Activated CD8-positive, alpha-beta T cell treated with anti-CD3 and anti-CD28 coated beads for 36 hours (primary cell): ENCODE measurements at regions of chr5 and their contacts with region 1.

Region 1: DNA sequence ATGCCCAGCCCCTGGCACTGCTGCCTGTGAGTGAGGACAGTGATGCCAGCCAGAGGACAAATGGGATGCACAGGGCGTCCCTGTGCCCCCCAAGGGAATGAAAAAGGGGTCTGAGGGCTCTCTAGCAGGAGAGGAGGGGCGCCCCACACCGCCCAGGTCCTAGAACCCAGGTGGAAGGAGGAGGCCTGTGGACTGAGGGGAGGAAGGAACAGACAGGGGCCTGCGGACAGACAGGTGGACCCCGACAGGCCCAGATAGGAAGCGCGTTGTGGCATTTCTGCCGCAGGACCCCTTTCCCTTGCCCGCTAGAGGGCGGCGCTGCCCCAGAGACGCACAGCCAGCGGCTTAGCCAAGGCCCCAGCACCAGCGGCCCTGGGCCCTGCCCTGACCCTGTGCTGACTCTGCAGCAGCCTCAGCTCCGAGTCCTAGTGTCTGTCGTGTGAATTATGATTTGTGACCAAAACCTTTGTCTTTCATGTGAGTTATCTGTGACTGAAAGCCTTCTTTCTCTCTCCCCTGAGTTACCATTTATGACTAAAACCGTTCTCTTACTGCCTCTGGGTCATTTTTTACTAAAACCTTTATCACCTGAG is 30.7 kb downstream of the TRIP13 start:
- DNase-seq: peak; percentile 85
- ATAC-seq: peak; percentile 91
- H3K4me3 Mint-ChIP-seq: no peak overlapping the region
- H3K27ac Mint-ChIP-seq: no peak overlapping the region
- H3K4me1 Mint-ChIP-seq: peaks cover 8% of the 10 kb centered on the region
- H3K27me3 Mint-ChIP-seq: peaks cover 28% of the 10 kb centered on the region
- CTCF ChIP-seq: peak; percentile 92

Region 2: GRCh38 chr5:821504-821903 is 101.9 kb before region 1 on chr5:
- CTCF ChIA-PET with region 1: no interaction called
- POLR2A ChIA-PET with region 1: no interaction called
- intact Hi-C with region 1: no loop called
- DNase-seq: no peak
- ATAC-seq: no peak
- H3K4me3 Mint-ChIP-seq: no peak overlapping the region
- H3K27ac Mint-ChIP-seq: no peak overlapping the region
- H3K4me1 Mint-ChIP-seq: no peaks in the 10 kb centered on the region
- H3K27me3 Mint-ChIP-seq: no peaks in the 10 kb centered on the region
- CTCF ChIP-seq: no peak

Region 3: GRCh38 chr5:902129-902916 is 21.1 kb before region 1 on chr5:
- CTCF ChIA-PET with region 1: interaction called, 17 read pairs
- POLR2A ChIA-PET with region 1: no interaction called
- intact Hi-C with region 1: no loop called
- DNase-seq: no peak
- ATAC-seq: no peak
- H3K4me3 Mint-ChIP-seq: no peak overlapping the region
- H3K27ac Mint-ChIP-seq: no peak overlapping the region
- H3K4me1 Mint-ChIP-seq: no peaks in the 10 kb centered on the region
- H3K27me3 Mint-ChIP-seq: no peaks in the 10 kb centered on the region
- CTCF ChIP-seq: no peak

Region 4: GRCh38 chr5:989961-990530 is 66.7 kb after region 1 on chr5:
- CTCF ChIA-PET with region 1: interaction called, 12 read pairs
- POLR2A ChIA-PET with region 1: no interaction called
- intact Hi-C with region 1: no loop called
- DNase-seq: no peak
- ATAC-seq: no peak
- H3K4me3 Mint-ChIP-seq: no peak overlapping the region
- H3K27ac Mint-ChIP-seq: no peak overlapping the region
- H3K4me1 Mint-ChIP-seq: no peaks in the 10 kb centered on the region
- H3K27me3 Mint-ChIP-seq: peaks cover 24% of the 10 kb centered on the region
- CTCF ChIP-seq: no peak

Region 5: DNA sequence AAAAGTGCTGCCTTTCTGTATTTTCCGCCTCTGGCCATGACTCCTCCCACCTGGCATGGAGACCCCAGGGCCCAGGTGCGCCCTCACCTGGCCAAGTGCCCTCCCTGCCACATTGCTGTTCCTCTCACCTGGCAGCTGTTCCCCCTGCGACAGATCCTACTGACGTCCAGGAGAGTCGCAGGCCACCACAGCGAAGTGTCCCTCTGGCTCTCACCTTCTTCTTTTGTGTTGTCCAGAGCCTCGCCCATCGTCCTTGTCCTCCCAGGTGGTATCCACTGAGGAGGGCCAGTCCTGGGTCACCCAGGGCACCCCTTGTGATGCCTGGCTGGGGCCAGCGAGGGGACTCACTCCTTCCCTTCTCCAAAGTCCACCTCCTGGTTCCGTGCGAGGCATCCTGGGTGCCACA is 87.9 kb after region 1 on chr5:
- CTCF ChIA-PET with region 1: interaction called, 105 read pairs
- POLR2A ChIA-PET with region 1: no interaction called
- intact Hi-C with region 1: loop called (anchors 5 kb)
- DNase-seq: peak; percentile 79
- ATAC-seq: peak; percentile 78
- H3K4me3 Mint-ChIP-seq: no peak overlapping the region
- H3K27ac Mint-ChIP-seq: no peak overlapping the region
- H3K4me1 Mint-ChIP-seq: peaks cover 14% of the 10 kb centered on the region
- H3K27me3 Mint-ChIP-seq: peaks cover 40% of the 10 kb centered on the region
- CTCF ChIP-seq: peak; percentile 60

Region 6: DNA sequence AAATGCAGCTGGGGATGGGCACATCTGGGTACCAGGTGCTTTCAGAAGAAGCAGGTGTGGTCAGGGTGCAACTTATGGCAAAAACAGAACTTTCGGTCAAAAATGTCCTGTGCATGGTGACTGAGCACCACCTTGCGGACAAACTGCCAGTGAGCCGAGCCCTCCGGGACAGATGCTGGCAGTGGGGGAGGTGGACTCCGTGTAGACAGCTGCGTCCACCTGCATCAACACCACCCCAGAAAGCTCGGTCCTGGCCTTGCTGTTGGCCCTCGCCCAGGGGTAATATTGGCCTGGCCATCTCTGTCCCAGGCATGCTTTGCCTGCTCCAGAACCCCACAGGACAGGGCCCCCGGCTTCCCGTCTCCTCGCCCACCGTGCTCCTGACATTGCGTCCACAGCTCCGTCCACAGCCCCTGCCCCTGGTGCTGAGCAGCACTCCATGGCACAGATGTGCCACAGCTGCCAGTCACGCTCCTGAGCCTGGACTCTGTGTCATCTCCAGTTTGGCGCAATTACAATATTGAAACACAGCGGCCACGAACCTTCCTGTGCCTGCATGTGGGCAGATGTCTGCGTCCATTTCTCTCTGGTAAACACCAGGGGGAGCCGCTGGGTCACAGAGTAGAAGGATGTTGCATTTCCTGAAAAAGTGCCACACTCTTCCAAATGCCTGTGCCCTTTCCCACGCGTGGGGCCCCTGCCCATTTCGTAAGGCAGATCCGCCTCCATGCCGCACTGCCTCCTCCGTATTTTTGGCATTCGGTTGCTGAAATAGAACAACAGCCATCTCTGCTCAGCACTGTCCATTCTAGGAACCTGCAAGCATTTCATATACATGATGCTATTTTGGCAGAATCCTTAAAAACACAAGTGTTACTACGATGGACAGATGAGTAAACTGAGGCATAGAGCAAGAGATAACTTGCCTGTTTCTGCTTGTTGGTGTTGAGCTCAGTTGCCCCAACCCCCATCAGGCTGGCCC is 244.6 kb after region 1 on chr5:
- CTCF ChIA-PET with region 1: interaction called, 25 read pairs
- POLR2A ChIA-PET with region 1: interaction called, 3 read pairs
- intact Hi-C with region 1: no loop called
- DNase-seq: peak; percentile 79
- ATAC-seq: peak; percentile 87
- H3K4me3 Mint-ChIP-seq: peak overlapping the region; percentile 55
- H3K27ac Mint-ChIP-seq: no peak overlapping the region
- H3K4me1 Mint-ChIP-seq: peaks cover 5% of the 10 kb centered on the region
- H3K27me3 Mint-ChIP-seq: peaks cover 10% of the 10 kb centered on the region
- CTCF ChIP-seq: peak; percentile 80